HepG2 (cell line): ENCODE measurements at regions of chr9 and their contacts with region 1.

Region 1: DNA sequence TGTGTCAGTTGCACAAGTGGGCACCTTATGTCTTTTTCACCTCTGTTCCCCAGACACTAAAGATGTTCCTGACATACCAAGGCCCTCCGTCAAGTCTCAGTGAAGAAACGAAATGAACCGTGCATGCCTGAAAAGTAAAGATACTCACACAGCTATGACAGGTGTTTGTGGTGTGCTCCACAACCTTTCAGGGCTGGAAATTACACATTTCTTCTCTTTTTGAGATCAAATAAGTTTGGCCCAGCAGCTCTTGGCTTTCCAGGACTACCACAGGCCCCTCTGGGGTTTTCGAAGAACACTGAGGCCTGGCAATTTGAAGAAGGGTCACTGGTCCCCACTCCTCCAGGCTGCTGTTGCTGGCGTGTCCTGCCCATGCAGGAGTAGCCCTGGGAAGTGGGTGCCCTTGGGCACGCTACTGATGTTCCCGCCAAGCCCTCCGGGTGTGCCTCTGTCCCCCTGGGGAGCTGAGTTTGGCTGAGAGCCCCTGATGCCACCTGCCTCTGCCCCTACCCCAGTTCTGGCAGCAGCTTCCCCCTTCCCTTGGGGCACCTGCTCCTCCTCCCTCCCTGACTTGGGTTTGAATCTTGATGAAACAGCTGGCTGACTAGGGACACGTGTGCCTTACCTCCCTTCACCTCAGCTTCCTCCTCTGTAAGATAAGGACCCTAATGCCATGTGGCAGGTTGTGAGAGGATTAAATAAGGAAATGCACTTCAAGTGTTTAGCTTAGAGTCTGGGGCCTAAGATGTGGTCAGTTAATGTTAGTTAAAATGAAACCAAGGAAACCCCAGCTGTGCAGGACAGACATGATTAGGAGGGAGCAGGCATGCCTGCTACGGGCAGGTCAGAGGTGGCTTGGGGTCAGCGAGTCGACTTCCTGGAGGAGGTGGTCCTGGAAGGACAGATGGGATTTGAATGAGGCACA is 49.1 kb upstream of the GADD45G start:
- DNase-seq: no peak
- ATAC-seq: no peak
- H3K4me3 ChIP-seq: peak overlapping the region; percentile 35 to 63 (median 42)
- H3K27ac ChIP-seq: peak overlapping the region; percentile 92
- H3K4me1 ChIP-seq: peaks cover 94% of the 10 kb centered on the region
- H3K27me3 ChIP-seq: no peaks in the 10 kb centered on the region
- CTCF ChIP-seq: no peak
- EP300 ChIP-seq: no peak
- POLR2A ChIP-seq: no peak
- RAD21 ChIP-seq: no peak

Region 2: GRCh38 chr9:89310475-89311346 is 245.0 kb before region 1 on chr9 and contains the start of gene CKS2:
- CTCF ChIA-PET with region 1: no interaction called
- POLR2A ChIA-PET with region 1: interaction called, 13 read pairs
- in situ Hi-C with region 1: loop called (anchors 10 kb)
- intact Hi-C with region 1: no loop called
- DNase-seq: peak; percentile 99
- ATAC-seq: peak; percentile 91
- H3K4me3 ChIP-seq: peak within 1 kb of the TSS; percentile 88 to 94 (median 88)
- H3K27ac ChIP-seq: peak within 1 kb of the TSS; percentile 96
- H3K4me1 ChIP-seq: peaks cover 35% of the 10 kb centered on the region
- H3K27me3 ChIP-seq: no peaks in the 10 kb centered on the region; a peak in 1 of 5 replicates
- CTCF ChIP-seq: 0 out of 2 replicates have a peak, but pooled peaks have one; percentile 27
- EP300 ChIP-seq: peak in 1 of 2 experiments; percentile 81; a peak in 3 of 4 replicates
- POLR2A ChIP-seq: peak; percentile 93 to 99
- RAD21 ChIP-seq: peak; percentile 49
- total RNA-seq, gene CKS2: 317 and 498 TPM in 2 replicates

Region 3: GRCh38 chr9:89318123-89319014 is 237.3 kb before region 1 on chr9 and contains the start of gene SECISBP2:
- CTCF ChIA-PET with region 1: no interaction called
- POLR2A ChIA-PET with region 1: interaction called, 7 read pairs
- in situ Hi-C with region 1: loop called (anchors 10 kb)
- intact Hi-C with region 1: no loop called
- DNase-seq: peak; percentile 93
- ATAC-seq: peak; percentile 95
- H3K4me3 ChIP-seq: peak within 1 kb of the TSS; percentile 71 to 81 (median 71)
- H3K27ac ChIP-seq: peak within 1 kb of the TSS; percentile 98
- H3K4me1 ChIP-seq: peaks cover 78% of the 10 kb centered on the region
- H3K27me3 ChIP-seq: no peaks in the 10 kb centered on the region
- CTCF ChIP-seq: peak; percentile 78
- EP300 ChIP-seq: peak in 1 of 2 experiments; percentile 31; a peak in 2 of 4 replicates
- POLR2A ChIP-seq: peak; percentile 77 to 94
- RAD21 ChIP-seq: peak; percentile 47
- total RNA-seq, gene SECISBP2: 32.4 and 32.9 TPM in 2 replicates

Region 4: DNA sequence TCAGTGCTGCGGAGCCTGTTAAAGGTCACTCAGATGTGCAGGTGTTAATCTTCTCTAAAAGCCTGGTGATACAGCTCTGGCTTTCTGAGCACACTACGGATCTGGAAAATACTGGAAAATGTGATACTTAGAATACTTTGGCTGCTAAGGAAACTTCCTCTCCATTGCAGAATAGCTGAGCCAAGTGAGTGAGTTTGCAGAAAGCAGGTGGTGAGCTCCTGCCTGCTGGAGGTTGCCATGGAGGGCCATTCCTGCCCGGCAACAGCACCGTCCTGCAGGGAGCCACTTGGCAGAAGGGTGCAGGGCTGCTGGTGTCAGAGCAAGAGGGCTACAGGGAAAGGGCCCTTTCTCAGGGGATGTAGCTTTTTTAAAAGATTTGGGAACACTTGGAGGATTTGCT is 196.7 kb before region 1 on chr9:
- CTCF ChIA-PET with region 1: no interaction called
- POLR2A ChIA-PET with region 1: interaction called, 7 read pairs
- in situ Hi-C with region 1: no loop called
- intact Hi-C with region 1: loop called (anchors 5 kb)
- DNase-seq: no peak
- ATAC-seq: no peak
- H3K4me3 ChIP-seq: no peak overlapping the region
- H3K27ac ChIP-seq: no peak overlapping the region
- H3K4me1 ChIP-seq: peaks cover 71% of the 10 kb centered on the region
- H3K27me3 ChIP-seq: no peaks in the 10 kb centered on the region
- CTCF ChIP-seq: no peak
- EP300 ChIP-seq: no peak
- POLR2A ChIP-seq: no peak
- RAD21 ChIP-seq: no peak